Naive thymus-derived CD4-positive, alpha-beta T cell (primary cell): ENCODE measurements at regions of chr9 and their contacts with region 1.

Region 1: DNA sequence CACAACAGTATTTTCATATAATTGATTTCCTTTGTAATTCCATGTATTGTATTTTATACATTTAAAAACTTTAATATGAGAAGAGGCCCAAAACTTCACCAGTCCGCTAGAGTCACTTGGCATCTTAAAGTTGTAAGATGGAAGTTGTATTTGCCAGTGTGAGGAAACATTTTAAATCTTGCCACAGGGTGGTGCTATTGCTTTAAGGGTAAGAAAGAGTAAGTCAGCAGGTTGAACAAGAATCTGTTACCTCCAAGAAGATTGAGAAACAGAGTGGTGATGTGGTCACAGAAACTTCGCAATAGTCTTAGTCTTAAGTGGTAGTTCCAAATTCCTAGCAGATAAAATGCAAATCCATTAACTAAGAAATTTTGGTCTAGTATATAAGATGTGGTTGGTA is 39.8 kb upstream of the RANBP6 start:
- DNase-seq: peak in 7 of 9 donors; percentile 42 to 69 (median 63)
- ATAC-seq: peak; percentile 86
- H3K4me3 ChIP-seq: no peak overlapping the region
- H3K4me3 Mint-ChIP-seq: no peak overlapping the region
- H3K27ac ChIP-seq: no peak overlapping the region
- H3K27ac Mint-ChIP-seq: peak overlapping the region in 2 of 9 donors; percentile 16 to 47
- H3K4me1 ChIP-seq: no peaks in the 10 kb centered on the region
- H3K4me1 Mint-ChIP-seq: peaks cover 0 to 7% (median 0%) of the 10 kb centered on the region in 7 donors
- H3K27me3 ChIP-seq: no peaks in the 10 kb centered on the region
- H3K27me3 Mint-ChIP-seq: peaks cover 0 to 19% (median 5%) of the 10 kb centered on the region in 5 donors

Region 2: GRCh38 chr9:5767968-5768918 is 287.0 kb before region 1 on chr9:
- CTCF ChIA-PET with region 1: no interaction called
- POLR2A ChIA-PET with region 1: no interaction called
- intact Hi-C with region 1: no loop called
- DNase-seq: no peak
- ATAC-seq: peak; percentile 67
- H3K4me3 ChIP-seq: no peak overlapping the region
- H3K4me3 Mint-ChIP-seq: peak overlapping the region in 2 of 10 donors; percentile 6 to 39
- H3K27ac ChIP-seq: no peak overlapping the region
- H3K27ac Mint-ChIP-seq: peak overlapping the region in 8 of 9 donors; percentile 3 to 80 (median 68)
- H3K4me1 ChIP-seq: no peaks in the 10 kb centered on the region
- H3K4me1 Mint-ChIP-seq: peaks cover 4 to 40% (median 10%) of the 10 kb centered on the region in 7 donors
- H3K27me3 ChIP-seq: no peaks in the 10 kb centered on the region
- H3K27me3 Mint-ChIP-seq: no peaks in the 10 kb centered on the region

Region 3: GRCh38 chr9:5799314-5799713 is 255.9 kb before region 1 on chr9:
- CTCF ChIA-PET with region 1: interaction called, 8 read pairs
- POLR2A ChIA-PET with region 1: no interaction called
- intact Hi-C with region 1: loop called (anchors 1 kb)
- DNase-seq: peak in 5 of 9 donors; percentile 7 to 34 (median 21)
- ATAC-seq: peak; percentile 38
- H3K4me3 ChIP-seq: no peak overlapping the region
- H3K4me3 Mint-ChIP-seq: peak overlapping the region in 2 of 10 donors; percentile 6 to 23
- H3K27ac ChIP-seq: no peak overlapping the region
- H3K27ac Mint-ChIP-seq: peak overlapping the region in 4 of 9 donors; percentile 40 to 67 (median 58)
- H3K4me1 ChIP-seq: peaks cover 5% of the 10 kb centered on the region in 2 donors
- H3K4me1 Mint-ChIP-seq: peaks cover 4 to 36% (median 23%) of the 10 kb centered on the region in 7 donors
- H3K27me3 ChIP-seq: no peaks in the 10 kb centered on the region
- H3K27me3 Mint-ChIP-seq: no peaks in the 10 kb centered on the region

Region 4: GRCh38 chr9:5920860-5921328 is 134.3 kb before region 1 on chr9:
- CTCF ChIA-PET with region 1: no interaction called
- POLR2A ChIA-PET with region 1: no interaction called
- intact Hi-C with region 1: no loop called
- DNase-seq: no peak
- ATAC-seq: no peak
- H3K4me3 ChIP-seq: no peak overlapping the region
- H3K4me3 Mint-ChIP-seq: no peak overlapping the region
- H3K27ac ChIP-seq: no peak overlapping the region
- H3K27ac Mint-ChIP-seq: no peak overlapping the region
- H3K4me1 ChIP-seq: no peaks in the 10 kb centered on the region
- H3K4me1 Mint-ChIP-seq: peaks cover 0 to 31% (median 8%) of the 10 kb centered on the region in 7 donors
- H3K27me3 ChIP-seq: no peaks in the 10 kb centered on the region
- H3K27me3 Mint-ChIP-seq: no peaks in the 10 kb centered on the region

Region 5: DNA sequence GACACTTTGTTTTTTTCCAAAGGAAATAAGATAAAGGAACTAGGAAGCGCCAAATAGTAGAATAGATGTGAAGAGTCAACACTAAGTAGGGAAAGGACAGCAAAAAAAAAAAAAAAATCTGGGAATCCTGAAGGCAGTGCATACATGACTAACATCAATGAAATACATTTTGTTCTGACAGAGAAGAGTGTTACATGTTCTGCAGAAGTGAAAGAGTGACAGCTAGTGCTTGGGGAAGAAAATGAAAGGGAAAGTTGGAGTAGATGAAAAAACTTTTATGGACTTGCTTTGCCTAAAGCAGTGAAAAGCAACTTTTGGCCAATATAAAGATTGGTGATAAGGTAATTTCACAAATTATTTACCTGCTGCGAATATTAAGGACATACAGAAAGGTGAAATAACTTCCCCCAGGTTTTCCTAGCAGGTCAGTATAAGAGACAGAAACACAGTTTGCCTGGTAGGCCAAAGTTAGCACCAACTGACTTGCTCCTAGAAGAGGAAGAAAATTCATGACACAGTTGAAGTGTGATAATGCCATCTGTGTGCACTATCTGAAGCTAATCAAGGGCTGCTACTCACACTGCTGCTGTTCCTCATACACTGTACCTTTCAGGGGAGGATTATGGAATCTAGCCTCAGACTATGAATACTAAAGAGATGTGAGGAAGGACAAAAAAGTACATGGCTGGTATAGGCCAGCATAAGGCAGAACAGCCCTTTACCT is 78.4 kb before region 1 on chr9:
- CTCF ChIA-PET with region 1: interaction called, 3 read pairs
- POLR2A ChIA-PET with region 1: no interaction called
- intact Hi-C with region 1: loop called in 1 of 2 experiments (anchors 5 kb)
- DNase-seq: no peak
- ATAC-seq: no peak
- H3K4me3 ChIP-seq: no peak overlapping the region
- H3K4me3 Mint-ChIP-seq: peak overlapping the region in 1 of 10 donors; percentile 16
- H3K27ac ChIP-seq: no peak overlapping the region
- H3K27ac Mint-ChIP-seq: peak overlapping the region in 5 of 9 donors; percentile 4 to 85 (median 50)
- H3K4me1 ChIP-seq: peaks cover 0 to 3% of the 10 kb centered on the region in 2 donors
- H3K4me1 Mint-ChIP-seq: peaks cover 20 to 57% (median 30%) of the 10 kb centered on the region in 7 donors
- H3K27me3 ChIP-seq: no peaks in the 10 kb centered on the region
- H3K27me3 Mint-ChIP-seq: no peaks in the 10 kb centered on the region

Region 6: DNA sequence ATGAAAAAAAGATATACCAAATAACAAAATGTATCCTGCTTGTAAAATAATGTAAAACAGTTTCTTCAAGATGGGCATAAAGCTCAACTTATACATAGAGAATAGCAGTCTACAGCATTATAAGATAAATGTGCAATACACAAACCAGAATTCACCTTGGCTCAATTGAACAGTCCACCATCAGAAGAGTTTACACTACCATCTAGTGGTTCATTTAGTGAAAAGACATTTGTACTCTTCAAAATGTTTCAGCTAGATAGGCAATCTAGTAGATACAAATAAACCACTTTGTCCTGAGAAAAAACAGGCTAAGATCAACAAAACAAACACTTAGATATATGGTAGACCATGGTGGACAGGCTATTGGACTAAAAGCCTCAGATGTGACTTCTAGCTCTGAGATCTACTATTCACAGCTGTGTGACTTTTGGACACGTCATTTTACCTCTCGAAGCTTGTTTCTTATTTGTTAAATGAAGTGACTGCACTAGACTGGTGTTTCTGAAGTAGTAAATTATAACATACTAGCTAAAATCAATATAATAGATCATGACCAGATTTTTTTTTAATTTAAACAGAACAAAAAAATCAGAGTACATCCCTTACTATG is 250.8 kb after region 1 on chr9:
- CTCF ChIA-PET with region 1: interaction called, 4 read pairs
- POLR2A ChIA-PET with region 1: no interaction called
- intact Hi-C with region 1: loop called in 1 of 2 experiments (anchors 1 kb)
- DNase-seq: peak in 5 of 9 donors; percentile 4 to 19 (median 13)
- ATAC-seq: no peak
- H3K4me3 ChIP-seq: no peak overlapping the region
- H3K4me3 Mint-ChIP-seq: no peak overlapping the region
- H3K27ac ChIP-seq: no peak overlapping the region
- H3K27ac Mint-ChIP-seq: no peak overlapping the region
- H3K4me1 ChIP-seq: no peaks in the 10 kb centered on the region
- H3K4me1 Mint-ChIP-seq: no peaks in the 10 kb centered on the region
- H3K27me3 ChIP-seq: peaks cover 0 to 4% of the 10 kb centered on the region in 2 donors
- H3K27me3 Mint-ChIP-seq: peaks cover 5 to 22% (median 12%) of the 10 kb centered on the region in 5 donors

Region 7: DNA sequence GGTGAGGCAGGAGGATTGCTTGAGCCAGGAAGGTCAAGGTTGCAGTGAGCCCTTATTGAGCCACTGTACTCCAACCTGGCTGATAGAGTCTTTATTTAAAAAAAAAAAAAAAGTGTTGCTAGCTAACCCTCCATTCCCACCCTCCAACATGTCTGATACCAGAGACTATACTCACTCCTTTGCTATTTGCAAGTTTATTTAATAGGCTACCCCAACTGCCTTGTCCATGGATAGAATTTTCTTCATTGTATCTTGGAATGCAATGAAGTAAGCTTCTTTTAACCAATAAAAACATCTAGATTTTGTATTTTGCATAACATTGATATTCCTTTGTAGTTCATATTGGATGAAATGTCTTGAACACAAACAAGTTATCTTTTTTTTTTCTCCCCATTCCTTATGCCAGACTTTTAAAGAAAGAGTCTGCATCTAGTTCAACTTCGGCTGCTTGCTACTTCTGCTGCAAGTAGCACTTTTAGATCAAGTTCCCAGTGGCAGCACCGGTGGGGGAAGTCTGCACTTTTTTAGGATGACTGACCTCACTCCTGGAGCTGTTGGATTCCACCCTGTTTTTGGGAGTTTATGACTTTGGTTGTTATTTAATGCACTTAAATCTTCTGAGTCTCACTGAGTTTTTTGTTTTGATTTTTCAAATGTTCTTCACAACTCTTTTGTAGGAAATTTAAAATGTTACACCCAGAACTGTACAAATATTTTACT is 470.3 kb after region 1 on chr9:
- CTCF ChIA-PET with region 1: no interaction called
- POLR2A ChIA-PET with region 1: no interaction called
- intact Hi-C with region 1: no loop called
- DNase-seq: no peak
- ATAC-seq: no peak
- H3K4me3 ChIP-seq: no peak overlapping the region
- H3K4me3 Mint-ChIP-seq: no peak overlapping the region
- H3K27ac ChIP-seq: no peak overlapping the region
- H3K27ac Mint-ChIP-seq: no peak overlapping the region
- H3K4me1 ChIP-seq: no peaks in the 10 kb centered on the region
- H3K4me1 Mint-ChIP-seq: peaks cover 0 to 1% (median 0%) of the 10 kb centered on the region in 7 donors
- H3K27me3 ChIP-seq: no peaks in the 10 kb centered on the region
- H3K27me3 Mint-ChIP-seq: no peaks in the 10 kb centered on the region

Region 8: DNA sequence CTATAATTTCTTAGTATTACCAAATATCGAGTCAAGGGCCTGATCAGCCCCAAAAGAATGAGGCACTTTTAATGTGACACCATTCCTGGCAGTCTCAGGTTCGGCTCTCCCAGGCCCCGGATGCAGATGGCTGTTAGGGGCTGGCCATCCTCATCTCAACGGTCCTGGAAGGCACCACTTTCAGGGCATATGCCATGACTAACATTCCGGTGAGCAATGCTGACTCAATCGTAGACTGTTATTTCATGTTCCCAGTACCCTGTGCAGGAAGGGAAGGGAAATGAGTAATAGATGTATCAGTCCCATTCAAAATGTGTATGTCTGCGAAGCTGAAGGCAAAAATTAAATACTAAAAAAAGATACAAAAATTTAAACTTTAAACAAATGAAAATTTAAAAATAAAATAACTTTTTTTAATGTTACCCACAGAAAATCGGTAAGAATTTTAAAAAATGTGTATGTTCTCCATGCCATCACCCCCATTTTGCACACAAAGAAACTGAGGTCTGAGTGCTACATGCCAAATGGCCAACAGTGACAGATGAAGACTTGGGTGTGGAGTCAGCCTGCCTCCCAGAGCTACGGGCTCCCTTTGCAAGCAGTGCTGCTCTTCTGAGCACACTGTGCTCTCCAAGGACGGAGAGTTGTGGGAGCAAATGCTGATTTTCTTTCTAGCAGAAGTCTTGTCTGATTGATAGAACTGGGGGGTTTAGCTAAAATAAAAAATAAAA is 511.4 kb after region 1 on chr9:
- CTCF ChIA-PET with region 1: no interaction called
- POLR2A ChIA-PET with region 1: no interaction called
- intact Hi-C with region 1: loop called in 1 of 2 experiments (anchors 5 kb)
- DNase-seq: peak in 1 of 9 donors; percentile 57
- ATAC-seq: peak; percentile 69
- H3K4me3 ChIP-seq: no peak overlapping the region
- H3K4me3 Mint-ChIP-seq: peak overlapping the region in 1 of 10 donors; percentile 62
- H3K27ac ChIP-seq: no peak overlapping the region
- H3K27ac Mint-ChIP-seq: peak overlapping the region in 2 of 9 donors; percentile 31 to 72
- H3K4me1 ChIP-seq: no peaks in the 10 kb centered on the region
- H3K4me1 Mint-ChIP-seq: peaks cover 0 to 23% (median 0%) of the 10 kb centered on the region in 7 donors
- H3K27me3 ChIP-seq: no peaks in the 10 kb centered on the region
- H3K27me3 Mint-ChIP-seq: peaks cover 0 to 7% (median 5%) of the 10 kb centered on the region in 5 donors